Mammary epithelial cell (primary cell): ENCODE measurements at regions of chr16 and their contacts with region 1.

Region 1: GRCh38 chr16:30445408-30446202 is at the start of gene SEPHS2:
- DNase-seq: peak; percentile 96
- H3K4me3 ChIP-seq: peak within 1 kb of the TSS; percentile 64 to 87 (median 73)
- H3K27ac ChIP-seq: peak within 1 kb of the TSS; percentile 81
- H3K4me1 ChIP-seq: peaks cover 11% of the 10 kb centered on the region
- H3K27me3 ChIP-seq: no peaks in the 10 kb centered on the region
- CTCF ChIP-seq: peak; percentile 15 to 53
- total RNA-seq, gene SEPHS2: 17.0 to 45.1 TPM

Region 2: GRCh38 chr16:30491744-30492308 is 46.2 kb after region 1 on chr16:
- CTCF ChIA-PET with region 1: no interaction called
- dilution Hi-C with region 1: no loop called
- in situ Hi-C with region 1: no loop called
- intact Hi-C with region 1: loop called (anchors 5 kb)
- DNase-seq: peak; percentile 62
- H3K4me3 ChIP-seq: no peak overlapping the region
- H3K27ac ChIP-seq: no peak overlapping the region
- H3K4me1 ChIP-seq: peaks cover 16% of the 10 kb centered on the region
- H3K27me3 ChIP-seq: no peaks in the 10 kb centered on the region
- CTCF ChIP-seq: no peak

Region 3: GRCh38 chr16:30519120-30520049 is 73.8 kb after region 1 on chr16:
- CTCF ChIA-PET with region 1: no interaction called
- dilution Hi-C with region 1: loop called (anchors 5 kb)
- in situ Hi-C with region 1: no loop called
- intact Hi-C with region 1: no loop called
- DNase-seq: no peak
- H3K4me3 ChIP-seq: no peak overlapping the region
- H3K27ac ChIP-seq: no peak overlapping the region
- H3K4me1 ChIP-seq: no peaks in the 10 kb centered on the region
- H3K27me3 ChIP-seq: no peaks in the 10 kb centered on the region
- CTCF ChIP-seq: no peak

Region 4: GRCh38 chr16:30526823-30527635 is 81.4 kb after region 1 on chr16:
- CTCF ChIA-PET with region 1: no interaction called
- dilution Hi-C with region 1: no loop called
- in situ Hi-C with region 1: loop called in 1 of 2 experiments (anchors 10 kb)
- intact Hi-C with region 1: loop called (anchors 1 kb)
- DNase-seq: peak; percentile 98
- H3K4me3 ChIP-seq: peak overlapping the region; percentile 65 to 96 (median 90)
- H3K27ac ChIP-seq: peak overlapping the region; percentile 88
- H3K4me1 ChIP-seq: peaks cover 18% of the 10 kb centered on the region
- H3K27me3 ChIP-seq: no peaks in the 10 kb centered on the region
- CTCF ChIP-seq: peak in 1 of 2 donors; percentile 42

Region 5: GRCh38 chr16:30534368-30535105 is 88.9 kb after region 1 on chr16 and contains the start of gene ZNF747:
- CTCF ChIA-PET with region 1: interaction called, 5 read pairs
- dilution Hi-C with region 1: no loop called
- in situ Hi-C with region 1: loop called in 1 of 2 experiments (anchors 10 kb)
- intact Hi-C with region 1: loop called (anchors 1 kb)
- DNase-seq: peak; percentile 75
- H3K4me3 ChIP-seq: peak within 1 kb of the TSS; percentile 50 to 64 (median 57)
- H3K27ac ChIP-seq: peak within 1 kb of the TSS; percentile 71
- H3K4me1 ChIP-seq: peaks cover 15% of the 10 kb centered on the region
- H3K27me3 ChIP-seq: no peaks in the 10 kb centered on the region
- CTCF ChIP-seq: peak in 1 of 2 donors; percentile 7
- total RNA-seq, gene ZNF747: 6.7 to 11.0 TPM

Region 6: DNA sequence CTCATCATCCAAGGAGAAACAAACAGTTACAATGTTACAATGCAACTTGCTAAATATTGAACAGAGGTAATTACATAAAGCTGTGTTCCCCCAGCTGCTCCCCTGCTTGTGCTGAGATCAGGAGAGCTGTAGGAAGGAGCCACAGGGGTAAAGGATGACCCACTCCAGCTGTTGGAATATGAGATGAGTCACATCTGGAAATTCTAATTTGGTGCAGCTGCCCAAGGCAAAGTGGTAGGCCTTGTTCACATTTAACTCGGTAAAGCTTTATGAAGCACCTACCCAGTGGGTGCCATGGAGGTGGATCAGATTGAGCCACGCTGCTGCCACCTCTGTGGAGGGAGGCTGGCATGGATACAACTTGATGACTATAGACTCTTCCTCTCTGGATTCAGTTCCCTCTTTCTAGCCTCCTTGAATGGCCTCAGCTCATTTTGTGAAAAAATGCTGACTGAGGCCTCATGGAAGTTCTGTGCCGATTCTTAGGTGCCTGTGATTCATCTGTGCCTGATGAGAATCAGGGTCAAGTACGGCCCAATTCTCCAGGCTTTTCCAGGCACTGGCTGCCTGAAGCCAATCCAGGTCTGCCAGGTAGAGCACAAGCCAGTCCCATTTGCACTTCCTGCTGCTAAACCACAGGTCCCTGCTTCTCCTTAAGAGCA is 157.1 kb after region 1 on chr16:
- CTCF ChIA-PET with region 1: no interaction called
- dilution Hi-C with region 1: no loop called
- in situ Hi-C with region 1: no loop called
- intact Hi-C with region 1: loop called (anchors 1 kb)
- DNase-seq: no peak
- H3K4me3 ChIP-seq: no peak overlapping the region
- H3K27ac ChIP-seq: no peak overlapping the region
- H3K4me1 ChIP-seq: peaks cover 3% of the 10 kb centered on the region
- H3K27me3 ChIP-seq: no peaks in the 10 kb centered on the region
- CTCF ChIP-seq: no peak

Region 7: DNA sequence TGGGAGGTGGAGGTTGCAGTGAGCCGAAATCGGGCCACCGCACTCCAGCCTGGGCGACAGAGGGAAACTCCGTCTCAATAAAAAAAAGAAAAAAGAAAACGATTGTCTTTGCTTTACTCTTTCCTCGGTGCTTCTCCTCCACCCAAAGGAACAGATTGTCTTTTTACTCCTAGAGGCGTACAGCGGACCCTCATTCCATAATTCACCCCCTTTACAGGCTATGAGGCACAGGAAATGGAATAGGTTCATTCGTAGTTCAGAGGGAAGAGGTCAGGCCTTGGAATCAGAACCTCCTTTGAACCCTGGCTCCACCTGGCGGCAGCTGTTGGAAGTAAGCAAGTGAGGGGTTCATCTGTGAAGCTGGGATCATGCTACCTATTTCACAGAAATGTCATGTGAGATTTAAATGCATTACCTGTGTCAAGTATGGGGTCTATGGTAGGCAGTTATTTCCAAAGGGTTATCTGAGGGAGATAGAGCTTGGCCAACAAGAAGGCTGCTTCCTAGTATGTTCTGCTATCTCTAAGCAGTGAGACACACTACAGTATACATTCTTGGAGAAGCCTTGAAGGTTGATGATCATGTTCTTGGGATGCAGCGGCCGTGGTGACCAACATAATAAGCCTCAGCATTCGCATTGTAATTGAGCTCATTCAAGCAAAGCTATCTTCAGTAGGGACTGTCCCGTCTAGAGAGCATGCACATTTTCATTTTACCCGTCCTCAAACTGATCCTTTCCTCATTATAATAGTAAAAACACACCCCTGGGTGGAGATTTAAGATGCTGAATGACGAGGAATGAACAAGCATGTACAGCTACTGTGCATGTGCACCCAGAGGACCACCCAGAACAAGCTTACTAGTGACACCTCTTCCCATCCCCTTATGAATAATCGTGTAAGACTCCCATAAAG is 183.3 kb after region 1 on chr16:
- CTCF ChIA-PET with region 1: no interaction called
- dilution Hi-C with region 1: no loop called
- in situ Hi-C with region 1: loop called in 1 of 2 experiments (anchors 10 kb)
- intact Hi-C with region 1: loop called (anchors 1 kb)
- DNase-seq: peak; percentile 46
- H3K4me3 ChIP-seq: no peak overlapping the region
- H3K27ac ChIP-seq: no peak overlapping the region
- H3K4me1 ChIP-seq: peaks cover 5% of the 10 kb centered on the region
- H3K27me3 ChIP-seq: no peaks in the 10 kb centered on the region
- CTCF ChIP-seq: peak; percentile 97 to 98